ENCODE measurements at regions of chr2 and their contacts with region 1.

Region 1: DNA sequence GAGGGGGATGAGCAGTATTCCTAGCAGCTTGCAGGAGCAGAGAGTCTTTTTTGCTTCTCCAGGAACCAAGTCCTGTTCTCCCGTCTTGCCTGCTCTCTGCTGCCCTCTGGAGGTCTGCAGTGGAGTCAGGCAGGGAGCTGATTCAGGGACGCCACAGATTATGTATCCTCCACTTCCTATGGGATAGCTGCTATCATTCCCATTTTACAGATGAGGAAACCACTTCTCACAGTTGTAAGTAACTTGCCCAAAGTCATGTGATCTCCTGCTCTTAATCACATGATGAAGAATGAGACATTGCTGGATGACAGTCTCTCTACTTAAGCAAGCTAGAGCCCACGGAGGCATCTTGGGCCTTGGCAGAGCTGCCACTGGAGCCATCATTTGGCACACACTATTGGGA is 8.3 kb downstream of the SLC4A5 start:
- DNase-seq: peak; percentile 76
- H3K4me3 Mint-ChIP-seq: no peak overlapping the region
- H3K27ac Mint-ChIP-seq: no peak overlapping the region
- H3K4me1 Mint-ChIP-seq: no peaks in the 10 kb centered on the region
- H3K27me3 Mint-ChIP-seq: no peaks in the 10 kb centered on the region

Region 2: DNA sequence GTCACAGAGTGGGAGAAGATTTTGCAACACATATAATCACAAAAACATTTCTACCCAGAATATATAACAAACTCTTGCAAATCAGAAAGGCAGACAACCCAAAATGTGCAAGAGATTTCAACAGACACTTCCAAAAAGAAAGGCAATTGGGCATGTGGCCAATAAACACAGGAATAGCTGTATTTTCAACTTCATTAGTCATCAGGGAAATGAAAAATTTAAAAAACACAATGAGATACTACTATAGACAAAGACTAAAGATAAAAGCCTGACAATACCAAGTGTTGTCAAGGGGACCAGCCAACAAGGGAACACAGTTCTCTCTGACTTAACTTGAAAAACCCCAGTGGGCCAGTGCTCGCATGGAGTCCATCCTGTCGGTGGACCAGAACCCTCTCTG is 96.1 kb before region 1 on chr2:
- CTCF ChIA-PET with region 1: interaction called, 10 read pairs
- POLR2A ChIA-PET with region 1: no interaction called
- DNase-seq: no peak
- H3K4me3 Mint-ChIP-seq: no peak overlapping the region
- H3K27ac Mint-ChIP-seq: no peak overlapping the region
- H3K4me1 Mint-ChIP-seq: no peaks in the 10 kb centered on the region
- H3K27me3 Mint-ChIP-seq: no peaks in the 10 kb centered on the region

Region 3: GRCh38 chr2:74267068-74267467 is 67.9 kb before region 1 on chr2:
- CTCF ChIA-PET with region 1: interaction called, 69 read pairs
- POLR2A ChIA-PET with region 1: interaction called, 6 read pairs
- DNase-seq: peak; percentile 80
- H3K4me3 Mint-ChIP-seq: no peak overlapping the region
- H3K27ac Mint-ChIP-seq: peak overlapping the region; percentile 85
- H3K4me1 Mint-ChIP-seq: peaks cover 31% of the 10 kb centered on the region
- H3K27me3 Mint-ChIP-seq: no peaks in the 10 kb centered on the region

Region 4: GRCh38 chr2:74316627-74317295 is 18.2 kb before region 1 on chr2:
- CTCF ChIA-PET with region 1: interaction called, 12 read pairs
- POLR2A ChIA-PET with region 1: no interaction called
- DNase-seq: no peak
- H3K4me3 Mint-ChIP-seq: no peak overlapping the region
- H3K27ac Mint-ChIP-seq: no peak overlapping the region
- H3K4me1 Mint-ChIP-seq: no peaks in the 10 kb centered on the region
- H3K27me3 Mint-ChIP-seq: no peaks in the 10 kb centered on the region

Region 5: DNA sequence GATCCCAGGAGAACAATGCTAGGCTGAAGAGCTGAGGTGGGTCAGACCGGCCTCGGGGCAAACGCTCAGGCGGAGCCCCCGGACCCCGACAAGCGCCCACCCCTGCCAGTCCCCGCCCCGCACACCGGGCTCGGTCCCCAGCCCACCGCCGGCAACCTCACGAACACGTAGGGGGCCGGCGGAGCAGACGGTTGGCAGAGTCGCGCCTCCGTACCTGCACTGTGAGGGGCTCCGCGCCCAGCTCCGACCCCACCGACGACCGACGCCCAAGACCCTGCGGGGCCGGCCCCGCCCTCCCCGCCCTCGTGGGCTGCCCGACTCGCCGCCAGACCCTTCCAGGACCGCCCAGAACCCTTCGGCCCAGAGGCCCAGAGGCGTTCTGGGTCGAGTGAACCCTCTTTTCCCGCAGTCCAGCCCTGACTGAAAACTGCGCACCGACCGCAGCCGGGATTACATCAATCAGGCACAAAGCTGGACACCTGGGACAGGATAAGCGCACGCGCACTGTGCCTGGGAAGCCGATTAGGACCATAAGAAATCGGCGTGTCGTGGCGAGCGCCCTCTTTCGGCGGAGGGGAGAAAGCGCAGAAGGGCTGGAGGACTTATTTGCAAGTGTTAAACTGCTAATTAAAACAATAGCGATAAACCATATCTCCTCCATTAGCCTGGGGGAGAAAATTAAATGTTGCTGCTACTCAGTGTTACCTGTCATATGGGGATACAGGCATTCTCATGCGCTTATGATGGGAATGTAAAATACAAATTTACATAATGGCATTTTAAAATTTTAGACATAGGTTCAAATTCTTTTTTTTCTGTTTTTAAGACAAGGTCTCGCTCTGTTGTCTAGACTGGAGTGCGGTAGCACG is 56.9 kb after region 1 on chr2:
- CTCF ChIA-PET with region 1: interaction called, 18 read pairs
- POLR2A ChIA-PET with region 1: no interaction called
- DNase-seq: peak; percentile 95
- H3K4me3 Mint-ChIP-seq: peak overlapping the region; percentile 94
- H3K27ac Mint-ChIP-seq: peak overlapping the region; percentile 96
- H3K4me1 Mint-ChIP-seq: peaks cover 12% of the 10 kb centered on the region
- H3K27me3 Mint-ChIP-seq: peaks cover 6% of the 10 kb centered on the region

Region 6: DNA sequence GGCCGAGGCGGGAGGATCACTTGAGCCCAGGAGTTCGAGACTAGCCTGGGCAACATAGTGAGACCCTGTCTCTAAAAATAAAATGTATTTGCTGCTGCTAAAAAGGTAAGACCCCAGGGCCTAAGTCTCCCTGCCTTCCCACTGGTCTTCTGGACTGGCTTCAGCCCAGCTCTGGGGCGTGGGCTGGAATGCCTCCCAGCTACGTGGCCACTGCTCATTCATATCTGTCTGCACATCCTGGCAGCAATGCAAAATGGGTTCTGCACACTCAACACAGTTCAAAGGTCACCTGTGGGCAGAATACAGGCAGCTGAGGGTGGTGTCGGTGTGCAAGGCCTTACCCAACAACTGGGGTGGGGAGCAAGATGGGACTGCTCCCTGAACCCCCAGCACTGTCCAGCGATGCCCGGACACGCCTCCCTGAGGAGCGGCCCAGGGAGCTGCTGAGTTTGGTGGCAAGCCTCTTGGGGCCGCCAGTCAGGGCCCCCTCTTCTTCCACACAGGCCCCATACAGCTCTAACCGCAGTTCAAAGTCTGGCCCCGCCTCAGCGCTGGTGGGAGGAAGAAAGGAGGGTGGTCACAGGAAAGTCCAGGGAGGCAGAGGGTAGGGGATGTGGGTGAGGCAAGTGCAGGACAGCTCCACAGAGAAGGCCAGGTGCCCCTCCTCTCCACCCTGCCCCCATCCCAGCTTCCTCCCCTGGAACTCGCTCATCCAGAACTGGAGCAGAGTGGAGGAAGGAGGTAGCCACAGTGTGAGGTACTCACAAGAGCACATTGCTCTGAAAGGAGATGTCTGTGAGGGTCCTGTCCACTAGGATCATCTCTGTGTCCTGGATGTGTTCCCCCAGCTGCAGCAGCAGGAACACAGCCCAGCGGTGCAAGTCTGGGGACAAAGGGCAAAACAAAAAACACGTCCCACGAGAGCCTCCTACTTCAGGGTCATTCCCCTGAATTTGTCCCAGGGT is 94.8 kb after region 1 on chr2:
- CTCF ChIA-PET with region 1: no interaction called
- POLR2A ChIA-PET with region 1: no interaction called
- DNase-seq: no peak
- H3K4me3 Mint-ChIP-seq: no peak overlapping the region
- H3K27ac Mint-ChIP-seq: no peak overlapping the region
- H3K4me1 Mint-ChIP-seq: no peaks in the 10 kb centered on the region
- H3K27me3 Mint-ChIP-seq: no peaks in the 10 kb centered on the region